ENCODE measurements at regions of chr17 and their contacts with region 1.

Region 1: GRCh38 chr17:47330548-47330947 is 6.8 kb downstream of the EFCAB13 start:
- DNase-seq: no peak
- ATAC-seq: no peak
- H3K4me3 ChIP-seq: no peak overlapping the region
- H3K27ac ChIP-seq: no peak overlapping the region
- H3K4me1 ChIP-seq: no peaks in the 10 kb centered on the region
- H3K27me3 ChIP-seq: no peaks in the 10 kb centered on the region
- CTCF ChIP-seq: no peak

Region 2: DNA sequence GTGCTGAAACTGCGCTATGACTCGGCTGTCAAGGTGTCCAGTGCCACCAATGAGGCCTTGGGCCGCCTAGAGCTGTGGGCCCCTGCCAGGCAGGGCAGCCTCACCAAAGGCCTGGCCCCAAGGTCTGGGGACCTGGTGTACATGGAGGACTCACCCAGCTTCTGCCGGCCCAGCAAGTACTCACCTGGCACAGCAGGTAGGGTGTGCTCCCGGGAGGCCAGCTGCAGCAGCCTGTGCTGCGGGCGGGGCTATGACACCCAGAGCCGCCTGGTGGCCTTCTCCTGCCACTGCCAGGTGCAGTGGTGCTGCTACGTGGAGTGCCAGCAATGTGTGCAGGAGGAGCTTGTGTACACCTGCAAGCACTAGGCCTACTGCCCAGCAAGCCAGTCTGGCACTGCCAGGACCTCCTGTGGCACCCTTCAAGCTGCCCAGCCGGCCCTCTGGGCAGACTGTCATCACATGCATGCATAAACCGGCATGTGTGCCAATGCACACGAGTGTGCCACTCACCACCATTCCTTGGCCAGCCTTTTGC is 454.1 kb before region 1 on chr17:
- intact Hi-C with region 1: loop called in 1 of 2 experiments (anchors 5 kb)
- DNase-seq: no peak
- ATAC-seq: no peak
- H3K4me3 ChIP-seq: no peak overlapping the region
- H3K27ac ChIP-seq: no peak overlapping the region
- H3K4me1 ChIP-seq: no peaks in the 10 kb centered on the region
- H3K27me3 ChIP-seq: no peaks in the 10 kb centered on the region
- CTCF ChIP-seq: no peak

Region 3: GRCh38 chr17:47225436-47225858 is 105.1 kb before region 1 on chr17:
- intact Hi-C with region 1: no loop called
- DNase-seq: no peak
- ATAC-seq: peak in 3 of 4 donors; percentile 31 to 64 (median 40)
- H3K4me3 ChIP-seq: no peak overlapping the region
- H3K27ac ChIP-seq: peak overlapping the region; percentile 79
- H3K4me1 ChIP-seq: peaks cover 6% of the 10 kb centered on the region
- H3K27me3 ChIP-seq: no peaks in the 10 kb centered on the region
- CTCF ChIP-seq: no peak

Region 4: DNA sequence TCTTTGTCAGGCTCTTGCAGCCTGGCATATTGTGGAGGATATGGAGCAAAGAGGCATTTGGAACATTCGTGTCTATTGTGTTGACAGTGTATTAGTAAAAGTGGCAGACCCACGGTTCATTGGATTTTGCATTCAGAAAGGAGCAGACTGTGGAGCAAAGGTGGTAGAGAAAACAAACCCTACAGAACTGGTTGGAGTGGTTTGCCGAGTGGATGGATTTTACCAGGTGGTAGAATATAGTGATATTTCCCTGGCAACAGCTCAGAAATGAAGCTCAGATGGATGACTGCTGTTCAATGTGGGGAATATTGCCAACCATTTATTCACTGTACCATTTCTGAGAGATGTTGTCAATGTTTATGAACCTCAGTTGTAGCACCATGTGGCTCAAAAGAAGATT is 37.7 kb after region 1 on chr17:
- intact Hi-C with region 1: no loop called
- DNase-seq: no peak
- ATAC-seq: no peak
- H3K4me3 ChIP-seq: no peak overlapping the region
- H3K27ac ChIP-seq: no peak overlapping the region
- H3K4me1 ChIP-seq: no peaks in the 10 kb centered on the region
- H3K27me3 ChIP-seq: no peaks in the 10 kb centered on the region
- CTCF ChIP-seq: no peak

Measured in psoas muscle (tissue), 8 donors.